Activated naive CD4-positive, alpha-beta T cell treated with anti-CD3 and anti-CD28 coated beads for 36 hours (primary cell): ENCODE measurements at regions of chr20 and their contacts with region 1.

Region 1: GRCh38 chr20:32528171-32528891 is 56.8 kb downstream of the NOL4L start:
- DNase-seq: peak; percentile 58
- H3K4me3 Mint-ChIP-seq: peak overlapping the region; percentile 60
- H3K27ac Mint-ChIP-seq: peak overlapping the region; percentile 93
- H3K4me1 Mint-ChIP-seq: peaks cover 88% of the 10 kb centered on the region
- H3K27me3 Mint-ChIP-seq: no peaks in the 10 kb centered on the region

Region 2: GRCh38 chr20:32553618-32554017 is 25.3 kb after region 1 on chr20:
- CTCF ChIA-PET with region 1: no interaction called
- intact Hi-C with region 1: loop called (anchors 2 kb)
- DNase-seq: no peak
- H3K4me3 Mint-ChIP-seq: no peak overlapping the region
- H3K27ac Mint-ChIP-seq: peak overlapping the region; percentile 78
- H3K4me1 Mint-ChIP-seq: peaks cover 68% of the 10 kb centered on the region
- H3K27me3 Mint-ChIP-seq: no peaks in the 10 kb centered on the region